ENCODE measurements at regions of chr1 and their contacts with region 1.

Region 1: GRCh38 chr1:185281245-185281644 is 35.8 kb downstream of the IVNS1ABP start:
- DNase-seq: peak; percentile 62 to 80 (median 76)
- H3K4me3 ChIP-seq: no peak overlapping the region
- H3K4me3 Mint-ChIP-seq: peak overlapping the region; percentile 33 to 89 (median 78)
- H3K27ac ChIP-seq: peak overlapping the region; percentile 31
- H3K27ac Mint-ChIP-seq: peak overlapping the region; percentile 86 to 97 (median 95)
- H3K4me1 ChIP-seq: peaks cover 65% of the 10 kb centered on the region
- H3K4me1 Mint-ChIP-seq: peaks cover 46 to 76% (median 64%) of the 10 kb centered on the region in 4 donors
- H3K27me3 ChIP-seq: no peaks in the 10 kb centered on the region
- H3K27me3 Mint-ChIP-seq: no peaks in the 10 kb centered on the region

Region 2: GRCh38 chr1:184892116-184892515 is 389.1 kb before region 1 on chr1:
- CTCF ChIA-PET with region 1: no interaction called
- POLR2A ChIA-PET with region 1: no interaction called
- intact Hi-C with region 1: no loop called
- DNase-seq: peak; percentile 19 to 39 (median 29)
- H3K4me3 ChIP-seq: no peak overlapping the region
- H3K4me3 Mint-ChIP-seq: peak overlapping the region in 7 of 8 donors; percentile 49 to 71 (median 59)
- H3K27ac ChIP-seq: peak overlapping the region; percentile 52
- H3K27ac Mint-ChIP-seq: peak overlapping the region; percentile 74 to 95 (median 90)
- H3K4me1 ChIP-seq: peaks cover 64% of the 10 kb centered on the region
- H3K4me1 Mint-ChIP-seq: peaks cover 42 to 74% (median 58%) of the 10 kb centered on the region in 4 donors
- H3K27me3 ChIP-seq: no peaks in the 10 kb centered on the region
- H3K27me3 Mint-ChIP-seq: no peaks in the 10 kb centered on the region

Region 3: DNA sequence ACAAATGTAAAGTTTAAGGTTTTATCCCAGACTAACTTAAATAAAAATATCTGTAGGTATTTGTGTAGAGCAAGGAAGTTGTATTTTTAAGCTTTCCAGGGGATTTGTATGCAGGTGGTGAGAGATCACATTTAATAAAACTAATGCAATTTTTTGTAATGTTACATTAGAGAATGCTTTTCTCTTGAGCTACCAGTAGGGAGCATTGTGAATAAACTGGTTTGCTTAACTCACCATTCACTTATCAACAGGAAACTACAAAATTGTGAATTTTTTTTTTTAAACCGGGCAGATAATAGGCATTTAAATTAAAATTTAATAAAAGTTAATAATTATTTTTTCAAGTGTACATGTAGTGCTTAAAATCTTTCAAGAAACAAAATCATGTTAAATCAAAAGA is 42.8 kb before region 1 on chr1:
- CTCF ChIA-PET with region 1: interaction called, 28 read pairs
- POLR2A ChIA-PET with region 1: interaction called, 60 read pairs
- intact Hi-C with region 1: loop called (anchors 1 kb)
- DNase-seq: peak in 4 of 5 donors; percentile 29 to 44 (median 35)
- H3K4me3 ChIP-seq: no peak overlapping the region
- H3K4me3 Mint-ChIP-seq: peak overlapping the region in 4 of 8 donors; percentile 4 to 60 (median 32)
- H3K27ac ChIP-seq: no peak overlapping the region
- H3K27ac Mint-ChIP-seq: peak overlapping the region in 2 of 7 donors; percentile 23 to 70
- H3K4me1 ChIP-seq: peaks cover 25% of the 10 kb centered on the region
- H3K4me1 Mint-ChIP-seq: peaks cover 17 to 35% (median 27%) of the 10 kb centered on the region in 4 donors
- H3K27me3 ChIP-seq: no peaks in the 10 kb centered on the region
- H3K27me3 Mint-ChIP-seq: no peaks in the 10 kb centered on the region

Region 4: DNA sequence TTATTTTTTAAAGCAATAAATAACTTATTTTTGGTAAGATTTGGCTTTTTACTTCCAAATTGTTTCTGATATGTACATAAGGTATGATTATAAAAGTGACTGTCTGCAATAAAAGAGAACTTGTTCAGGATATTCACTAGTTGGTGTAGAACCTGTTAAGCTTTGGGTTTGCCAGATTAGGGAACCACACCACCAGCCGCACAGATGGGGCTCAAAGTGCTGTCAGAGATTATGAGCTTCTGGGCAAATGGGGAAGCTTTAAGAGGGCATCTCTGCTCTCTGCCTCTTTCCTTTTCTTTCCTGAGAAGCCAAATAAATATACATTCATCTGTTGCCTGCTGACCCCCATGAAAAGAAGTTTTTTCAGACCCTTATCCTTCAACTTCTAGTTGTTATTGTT is 10.4 kb after region 1 on chr1:
- CTCF ChIA-PET with region 1: interaction called, 22 read pairs
- POLR2A ChIA-PET with region 1: interaction called, 47 read pairs
- intact Hi-C with region 1: loop called (anchors 1 kb)
- DNase-seq: no peak
- H3K4me3 ChIP-seq: no peak overlapping the region
- H3K4me3 Mint-ChIP-seq: no peak overlapping the region
- H3K27ac ChIP-seq: no peak overlapping the region
- H3K27ac Mint-ChIP-seq: peak overlapping the region in 4 of 7 donors; percentile 22 to 88 (median 70)
- H3K4me1 ChIP-seq: peaks cover 7% of the 10 kb centered on the region
- H3K4me1 Mint-ChIP-seq: peaks cover 7 to 32% (median 17%) of the 10 kb centered on the region in 4 donors
- H3K27me3 ChIP-seq: no peaks in the 10 kb centered on the region
- H3K27me3 Mint-ChIP-seq: no peaks in the 10 kb centered on the region

Region 5: DNA sequence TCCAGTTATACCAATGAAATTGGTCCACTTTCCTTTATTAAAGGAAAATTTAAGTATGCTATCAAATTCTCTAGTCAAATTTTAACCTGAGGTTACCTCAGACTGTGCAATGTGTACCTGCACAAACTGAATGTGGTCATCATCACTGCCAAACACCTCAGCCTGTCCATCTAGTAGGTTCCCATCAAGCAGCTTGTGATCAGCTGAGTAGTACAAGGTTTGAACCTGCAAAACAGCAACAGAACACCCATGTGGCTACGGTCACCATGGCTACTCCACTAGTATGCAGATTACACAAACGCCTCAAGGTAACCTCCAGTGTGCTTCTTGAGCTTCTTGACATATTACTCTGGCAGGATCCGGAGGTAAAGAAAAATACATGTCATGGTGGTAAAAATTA is 24.2 kb after region 1 on chr1:
- CTCF ChIA-PET with region 1: interaction called, 4 read pairs
- POLR2A ChIA-PET with region 1: interaction called, 11 read pairs
- intact Hi-C with region 1: no loop called
- DNase-seq: no peak
- H3K4me3 ChIP-seq: no peak overlapping the region
- H3K4me3 Mint-ChIP-seq: no peak overlapping the region
- H3K27ac ChIP-seq: no peak overlapping the region
- H3K27ac Mint-ChIP-seq: peak overlapping the region in 4 of 7 donors; percentile 25 to 72 (median 39)
- H3K4me1 ChIP-seq: no peaks in the 10 kb centered on the region
- H3K4me1 Mint-ChIP-seq: peaks cover 3 to 13% (median 8%) of the 10 kb centered on the region in 4 donors
- H3K27me3 ChIP-seq: no peaks in the 10 kb centered on the region
- H3K27me3 Mint-ChIP-seq: no peaks in the 10 kb centered on the region

Region 6: GRCh38 chr1:185325413-185325812 is 44.2 kb after region 1 on chr1:
- CTCF ChIA-PET with region 1: no interaction called
- POLR2A ChIA-PET with region 1: no interaction called
- intact Hi-C with region 1: no loop called
- DNase-seq: no peak
- H3K4me3 ChIP-seq: no peak overlapping the region
- H3K4me3 Mint-ChIP-seq: no peak overlapping the region
- H3K27ac ChIP-seq: no peak overlapping the region
- H3K27ac Mint-ChIP-seq: no peak overlapping the region
- H3K4me1 ChIP-seq: no peaks in the 10 kb centered on the region
- H3K4me1 Mint-ChIP-seq: peaks cover 0 to 2% (median 0%) of the 10 kb centered on the region in 4 donors
- H3K27me3 ChIP-seq: no peaks in the 10 kb centered on the region
- H3K27me3 Mint-ChIP-seq: no peaks in the 10 kb centered on the region

Region 7: DNA sequence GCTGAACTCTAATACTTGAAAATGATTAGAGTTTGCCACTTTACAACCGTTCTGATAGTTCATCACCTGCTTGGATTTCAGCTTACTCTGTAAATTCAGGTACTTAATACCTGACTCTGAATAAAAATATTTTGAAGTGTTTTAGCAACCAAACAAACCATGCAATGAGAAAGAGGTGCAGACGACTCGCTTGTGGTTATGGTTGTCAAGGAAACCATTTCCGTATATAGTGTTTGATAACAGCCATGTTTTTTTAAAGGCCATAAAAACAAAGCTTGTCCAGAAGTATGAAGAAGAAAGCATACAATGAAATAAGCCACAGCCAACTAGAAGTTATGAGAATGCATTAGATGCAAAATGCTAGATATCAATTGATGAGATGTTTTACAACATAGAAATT is 285.8 kb after region 1 on chr1:
- CTCF ChIA-PET with region 1: interaction called, 5 read pairs
- POLR2A ChIA-PET with region 1: interaction called, 27 read pairs
- intact Hi-C with region 1: no loop called
- DNase-seq: peak; percentile 85 to 94 (median 91)
- H3K4me3 ChIP-seq: peak overlapping the region in 1 of 2 donors; percentile 21
- H3K4me3 Mint-ChIP-seq: peak overlapping the region; percentile 26 to 87 (median 75)
- H3K27ac ChIP-seq: peak overlapping the region; percentile 80
- H3K27ac Mint-ChIP-seq: peak overlapping the region; percentile 94 to 100 (median 99)
- H3K4me1 ChIP-seq: peaks cover 81% of the 10 kb centered on the region
- H3K4me1 Mint-ChIP-seq: peaks cover 62 to 91% (median 75%) of the 10 kb centered on the region in 4 donors
- H3K27me3 ChIP-seq: no peaks in the 10 kb centered on the region
- H3K27me3 Mint-ChIP-seq: no peaks in the 10 kb centered on the region

Region 8: DNA sequence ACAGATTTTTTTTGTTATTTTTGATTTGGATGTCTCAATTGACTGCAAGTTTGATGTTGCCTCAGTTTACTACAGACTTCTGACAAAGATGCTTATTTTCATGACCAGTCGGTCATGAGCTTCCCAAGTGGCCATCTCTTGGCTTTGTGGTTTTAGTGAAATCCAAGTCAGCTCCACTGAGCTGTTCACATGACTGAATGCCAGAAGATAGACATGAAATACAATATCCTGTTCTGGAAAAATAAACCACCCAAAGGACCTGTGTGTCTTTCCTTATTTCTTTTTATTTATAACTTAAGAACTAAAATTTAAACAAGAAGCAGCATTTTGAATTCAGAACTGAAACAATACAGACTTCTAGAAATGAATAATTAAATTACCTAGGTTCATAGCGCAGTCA is 542.2 kb after region 1 on chr1:
- CTCF ChIA-PET with region 1: no interaction called
- POLR2A ChIA-PET with region 1: no interaction called
- intact Hi-C with region 1: no loop called
- DNase-seq: no peak
- H3K4me3 ChIP-seq: no peak overlapping the region
- H3K4me3 Mint-ChIP-seq: no peak overlapping the region
- H3K27ac ChIP-seq: no peak overlapping the region
- H3K27ac Mint-ChIP-seq: no peak overlapping the region
- H3K4me1 ChIP-seq: no peaks in the 10 kb centered on the region
- H3K4me1 Mint-ChIP-seq: no peaks in the 10 kb centered on the region
- H3K27me3 ChIP-seq: no peaks in the 10 kb centered on the region
- H3K27me3 Mint-ChIP-seq: peaks cover 2 to 9% of the 10 kb centered on the region in 2 donors

Region 9: GRCh38 chr1:186236921-186237320 is 955.7 kb after region 1 on chr1:
- CTCF ChIA-PET with region 1: no interaction called
- POLR2A ChIA-PET with region 1: no interaction called
- intact Hi-C with region 1: no loop called
- DNase-seq: no peak
- H3K4me3 ChIP-seq: no peak overlapping the region
- H3K4me3 Mint-ChIP-seq: no peak overlapping the region
- H3K27ac ChIP-seq: no peak overlapping the region
- H3K27ac Mint-ChIP-seq: no peak overlapping the region
- H3K4me1 ChIP-seq: no peaks in the 10 kb centered on the region
- H3K4me1 Mint-ChIP-seq: no peaks in the 10 kb centered on the region
- H3K27me3 ChIP-seq: no peaks in the 10 kb centered on the region
- H3K27me3 Mint-ChIP-seq: peaks cover 5 to 12% of the 10 kb centered on the region in 2 donors

Measured in CD4-positive, alpha-beta memory T cell (primary cell).